CD4-positive, alpha-beta T cell (primary cell): ENCODE measurements at regions of chr7 and their contacts with region 1.

Region 1: DNA sequence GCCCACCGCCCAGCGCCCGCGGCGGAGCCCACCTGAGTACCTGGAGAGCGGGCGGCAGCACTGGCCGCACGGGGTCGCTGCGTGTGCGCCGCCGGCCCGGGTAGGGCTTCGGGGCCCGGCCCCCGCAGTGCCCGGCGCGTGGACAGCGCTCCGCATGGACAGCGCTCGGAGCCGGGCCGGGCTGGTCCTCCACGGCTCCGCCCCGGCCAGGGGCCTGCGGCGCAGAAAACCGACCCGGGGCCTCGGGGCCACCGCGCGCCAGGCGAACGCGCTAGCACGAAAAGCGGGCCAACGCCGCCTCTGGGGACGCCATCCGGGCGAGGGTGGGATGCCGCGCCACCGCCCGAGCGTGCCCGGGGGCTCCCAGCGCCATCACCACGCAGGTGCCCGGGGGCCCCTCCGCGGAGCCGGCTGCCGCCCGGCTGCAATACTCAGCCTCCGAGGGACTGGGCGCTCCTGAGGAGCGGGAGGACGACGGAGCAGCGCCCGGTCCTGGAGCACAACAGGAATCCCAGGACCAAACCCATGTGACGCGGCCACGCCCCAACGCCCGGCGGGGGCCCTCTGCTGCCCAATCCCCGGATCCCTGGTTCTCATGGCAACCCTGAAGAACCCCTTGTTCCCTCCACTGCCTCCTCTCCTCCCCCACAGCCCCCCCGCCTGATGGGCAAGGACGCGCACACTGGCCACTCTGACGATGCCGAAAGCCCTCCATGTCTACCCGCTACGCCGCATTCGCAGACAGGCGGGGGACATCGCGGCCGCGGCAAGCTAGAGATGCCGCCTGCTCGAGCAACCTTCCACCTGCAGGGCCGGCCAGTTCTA is at the start of gene GRB10:
- DNase-seq: peak in 4 of 14 experiments; percentile 2 to 47 (median 34)
- ATAC-seq: no peak
- H3K4me3 ChIP-seq: peak within 1 kb of the TSS; percentile 52
- H3K4me3 Mint-ChIP-seq: peak within 1 kb of the TSS; percentile 82
- H3K27ac ChIP-seq: no peak within 1 kb of the TSS
- H3K27ac Mint-ChIP-seq: peak within 1 kb of the TSS; percentile 71
- H3K4me1 ChIP-seq: peaks cover 16% of the 10 kb centered on the region
- H3K4me1 Mint-ChIP-seq: peaks cover 20% of the 10 kb centered on the region
- H3K27me3 ChIP-seq: peaks cover 0 to 4% of the 10 kb centered on the region in 2 experiments
- H3K27me3 Mint-ChIP-seq: peaks cover 50% of the 10 kb centered on the region
- CTCF ChIP-seq: no peak
- total RNA-seq, gene GRB10: 5.9 to 8.4 TPM

Region 2: DNA sequence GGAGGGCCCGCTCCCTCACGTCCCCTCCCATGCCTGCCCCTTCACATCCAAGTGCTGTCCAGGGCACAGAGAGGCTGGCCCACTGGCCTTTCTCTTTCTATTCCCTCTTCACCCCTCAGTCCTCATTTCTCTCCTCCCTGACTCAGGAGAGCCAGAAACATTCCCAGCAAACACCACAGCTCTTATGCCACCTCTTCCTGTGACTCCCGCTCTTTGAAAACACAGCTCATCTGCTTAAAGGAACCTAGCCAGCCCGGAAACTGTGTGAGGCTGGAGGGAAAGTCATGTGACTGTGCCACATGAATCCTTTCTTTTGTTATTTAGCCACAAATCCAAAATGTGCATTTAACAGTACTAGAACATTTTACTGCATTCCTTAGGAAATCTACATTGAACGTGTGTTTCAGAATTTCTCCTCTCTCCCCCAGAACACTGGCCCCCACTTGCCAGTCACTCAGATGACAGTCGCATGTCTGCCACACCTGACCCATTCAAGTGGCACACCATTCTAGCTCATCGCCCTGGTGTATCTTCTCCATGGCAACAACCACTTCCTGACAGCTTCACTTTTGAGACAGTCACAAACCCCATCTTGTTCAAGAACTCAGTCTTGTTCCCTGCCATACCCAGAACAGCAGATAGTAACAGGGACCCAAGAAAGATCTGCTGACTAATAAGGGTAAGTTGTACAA is 42.7 kb before region 1 on chr7:
- CTCF ChIA-PET with region 1: no interaction called
- POLR2A ChIA-PET with region 1: interaction called, 3 read pairs
- intact Hi-C with region 1: loop called (anchors 5 kb)
- DNase-seq: peak; percentile 40 to 95 (median 61)
- ATAC-seq: peak; percentile 98
- H3K4me3 ChIP-seq: peak overlapping the region; percentile 34
- H3K4me3 Mint-ChIP-seq: peak overlapping the region; percentile 72
- H3K27ac ChIP-seq: peak overlapping the region; percentile 75 to 79
- H3K27ac Mint-ChIP-seq: peak overlapping the region; percentile 86
- H3K4me1 ChIP-seq: peaks cover 14% of the 10 kb centered on the region
- H3K4me1 Mint-ChIP-seq: peaks cover 28% of the 10 kb centered on the region
- H3K27me3 ChIP-seq: no peaks in the 10 kb centered on the region
- H3K27me3 Mint-ChIP-seq: no peaks in the 10 kb centered on the region
- CTCF ChIP-seq: no peak